ENCODE measurements at regions of chr13 and their contacts with region 1.

Region 1: DNA sequence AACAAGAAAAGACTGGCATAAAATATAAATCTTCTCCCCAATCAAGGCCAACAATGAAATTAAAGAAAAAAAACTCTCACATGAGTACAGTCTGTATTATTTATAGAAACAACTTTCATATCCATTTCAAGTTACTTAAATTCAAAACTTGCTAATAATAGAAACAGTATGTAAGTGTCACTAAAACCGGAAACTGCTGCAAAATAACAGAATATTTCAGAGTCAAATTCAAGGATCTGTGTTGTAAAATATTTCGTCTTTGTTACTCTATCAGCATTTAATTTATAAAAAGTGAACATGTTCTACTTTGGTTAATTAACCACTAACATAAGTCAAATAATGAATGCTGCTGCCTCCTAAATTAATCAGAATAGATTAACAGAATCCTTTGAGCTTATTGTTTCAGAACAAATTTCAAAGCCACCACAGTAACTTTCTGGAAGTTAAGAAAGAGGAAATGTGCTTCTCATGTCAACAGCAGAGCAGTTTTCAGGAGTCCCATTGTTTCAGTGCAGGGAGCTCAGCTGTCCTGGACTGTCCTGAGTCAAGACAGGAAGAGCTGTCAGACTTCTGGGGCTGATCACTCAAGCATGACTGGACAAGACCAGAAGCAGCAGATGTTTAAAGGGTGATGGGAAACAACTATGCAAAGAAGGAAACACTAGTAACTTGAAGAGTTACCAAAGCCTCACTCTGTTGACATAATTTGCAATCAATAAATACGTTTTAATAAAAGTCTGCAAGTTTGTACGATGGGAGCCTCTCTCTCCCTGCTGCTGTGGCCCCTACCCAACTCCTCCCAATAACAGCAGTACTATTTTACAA is 76.9 kb downstream of the FOXO1 start:
- DNase-seq: peak; percentile 74 to 79
- ATAC-seq: peak; percentile 86
- H3K4me3 ChIP-seq: peak overlapping the region in 3 of 4 donors; percentile 20 to 22 (median 21)
- H3K27ac ChIP-seq: peak overlapping the region; percentile 83 to 89 (median 86)
- H3K4me1 ChIP-seq: peaks cover 93 to 96% of the 10 kb centered on the region in 2 donors
- H3K27me3 ChIP-seq: no peaks in the 10 kb centered on the region
- CTCF ChIP-seq: no peak
- POLR2A ChIP-seq: peak; percentile 40 to 71

Region 2: DNA sequence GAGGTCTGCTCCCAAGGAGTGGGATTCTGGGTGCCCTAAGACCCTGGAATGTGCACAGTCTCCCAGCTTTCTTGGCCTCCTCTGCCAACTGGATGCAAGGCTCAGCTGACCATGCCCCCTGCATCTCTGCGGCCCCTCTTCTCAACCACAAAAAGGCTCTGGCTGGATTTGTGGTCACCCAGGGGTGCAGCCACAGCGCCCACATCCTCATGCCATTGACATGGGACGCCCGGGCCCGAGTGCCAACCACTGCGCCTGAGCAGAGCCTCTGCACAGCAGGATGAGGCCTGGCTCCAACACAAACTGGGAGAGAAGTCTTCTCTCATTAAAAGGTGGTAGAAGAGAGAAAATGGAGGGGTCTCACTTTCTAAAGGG is 26.5 kb before region 1 on chr13:
- in situ Hi-C with region 1: no loop called
- intact Hi-C with region 1: loop called (anchors 1 kb)
- DNase-seq: no peak
- ATAC-seq: no peak
- H3K4me3 ChIP-seq: no peak overlapping the region
- H3K27ac ChIP-seq: peak overlapping the region; percentile 72 to 78 (median 75)
- H3K4me1 ChIP-seq: peaks cover 85 to 89% of the 10 kb centered on the region in 2 donors
- H3K27me3 ChIP-seq: no peaks in the 10 kb centered on the region
- CTCF ChIP-seq: no peak
- POLR2A ChIP-seq: no peak

Region 3: DNA sequence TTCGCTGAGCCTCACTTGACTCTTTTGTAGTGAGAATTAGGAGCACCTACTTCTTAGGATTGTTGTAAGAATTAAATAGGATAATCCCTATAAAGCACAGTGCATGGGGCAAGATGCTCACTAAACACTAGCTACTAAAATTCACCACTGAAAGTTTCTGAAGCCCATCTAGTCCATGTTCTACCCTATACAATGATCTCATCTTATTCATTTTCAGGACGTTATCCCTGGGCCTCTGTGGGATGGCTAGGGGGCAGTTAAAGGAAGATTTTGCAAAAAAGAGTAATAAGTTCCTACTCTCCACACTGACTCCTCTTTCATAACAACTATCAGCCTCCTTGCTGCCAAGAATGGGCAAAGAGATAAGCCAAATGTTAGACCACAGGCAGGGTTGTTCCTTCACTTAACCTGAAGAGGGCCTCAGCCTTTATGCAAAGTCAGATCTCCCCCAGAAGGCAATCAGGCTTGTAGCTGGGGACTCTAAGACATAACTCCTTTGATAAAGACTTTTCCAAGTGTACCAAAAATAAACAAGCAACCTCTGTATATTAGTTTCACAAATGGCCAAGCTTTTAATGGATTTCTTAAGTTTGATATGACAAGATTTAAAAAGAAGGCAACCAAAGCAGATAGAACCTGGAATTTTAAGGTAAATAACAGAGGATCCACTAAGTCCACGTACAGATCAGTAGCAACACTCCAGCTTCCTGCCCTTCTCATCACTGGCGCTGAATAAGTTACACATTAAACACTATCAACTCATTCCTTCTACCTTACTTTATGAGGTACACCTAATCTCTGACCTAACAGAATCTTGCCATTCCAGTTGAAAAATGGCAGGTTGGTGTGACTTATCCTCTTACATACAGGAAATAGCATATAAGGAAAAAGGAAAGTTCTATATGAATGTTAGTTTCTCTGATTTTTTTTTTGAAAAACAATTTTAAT is 385.2 kb after region 1 on chr13:
- in situ Hi-C with region 1: no loop called
- intact Hi-C with region 1: no loop called
- DNase-seq: peak in 1 of 2 donors; percentile 21
- ATAC-seq: peak; percentile 57 to 93
- H3K4me3 ChIP-seq: peak overlapping the region in 1 of 4 donors; percentile 3
- H3K27ac ChIP-seq: peak overlapping the region in 2 of 4 donors; percentile 3 to 22
- H3K4me1 ChIP-seq: peaks cover 70 to 92% of the 10 kb centered on the region in 2 donors
- H3K27me3 ChIP-seq: no peaks in the 10 kb centered on the region
- CTCF ChIP-seq: peak in 4 of 5 experiments; percentile 24 to 52 (median 35)
- POLR2A ChIP-seq: no peak